IMR-90 (cell line): ENCODE measurements at regions of chr3 and their contacts with region 1.

Region 1: GRCh38 chr3:134427400-134428145 is 53.3 kb upstream of the AMOTL2 start:
- DNase-seq: peak; percentile 100
- ATAC-seq: peak; percentile 88
- H3K4me3 ChIP-seq: no peak overlapping the region
- H3K27ac ChIP-seq: peak overlapping the region; percentile 90
- H3K4me1 ChIP-seq: peaks cover 32% of the 10 kb centered on the region
- H3K27me3 ChIP-seq: no peaks in the 10 kb centered on the region
- CTCF ChIP-seq: peak; percentile 36
- POLR2A ChIP-seq: peak; percentile 86
- RAD21 ChIP-seq: peak; percentile 63

Region 2: DNA sequence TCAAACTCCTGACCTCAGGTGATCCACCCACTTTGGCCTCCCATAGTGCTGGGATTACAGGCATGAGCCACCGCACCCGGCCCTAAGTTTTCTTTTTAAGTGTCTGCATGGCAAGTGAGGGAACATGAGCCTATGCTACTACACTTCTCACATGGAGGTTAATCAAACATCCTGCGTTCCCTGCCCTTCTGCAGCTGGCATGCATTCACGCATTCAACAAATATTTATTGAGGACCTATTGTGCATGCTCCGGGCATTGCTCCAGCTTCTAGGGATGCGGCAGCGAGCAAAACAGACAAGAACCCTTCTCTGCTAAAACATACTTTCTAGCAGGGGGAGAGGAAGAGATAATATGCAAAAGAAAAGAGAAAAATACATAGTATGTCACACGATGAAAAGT is 1873.1 kb before region 1 on chr3:
- CTCF ChIA-PET with region 1: no interaction called
- POLR2A ChIA-PET with region 1: no interaction called
- dilution Hi-C with region 1: no loop called
- in situ Hi-C with region 1: no loop called
- intact Hi-C with region 1: no loop called
- DNase-seq: peak; percentile 51
- ATAC-seq: peak; percentile 60
- H3K4me3 ChIP-seq: no peak overlapping the region
- H3K27ac ChIP-seq: no peak overlapping the region
- H3K4me1 ChIP-seq: peaks cover 12% of the 10 kb centered on the region
- H3K27me3 ChIP-seq: no peaks in the 10 kb centered on the region
- CTCF ChIP-seq: no peak
- POLR2A ChIP-seq: no peak
- RAD21 ChIP-seq: no peak

Region 3: GRCh38 chr3:134381827-134382442 is 45.6 kb before region 1 on chr3:
- CTCF ChIA-PET with region 1: no interaction called
- POLR2A ChIA-PET with region 1: no interaction called
- dilution Hi-C with region 1: no loop called
- in situ Hi-C with region 1: loop called (anchors 5 kb)
- intact Hi-C with region 1: no loop called
- DNase-seq: no peak
- ATAC-seq: no peak
- H3K4me3 ChIP-seq: no peak overlapping the region
- H3K27ac ChIP-seq: no peak overlapping the region
- H3K4me1 ChIP-seq: no peaks in the 10 kb centered on the region
- H3K27me3 ChIP-seq: no peaks in the 10 kb centered on the region
- CTCF ChIP-seq: no peak
- POLR2A ChIP-seq: no peak
- RAD21 ChIP-seq: no peak

Region 4: DNA sequence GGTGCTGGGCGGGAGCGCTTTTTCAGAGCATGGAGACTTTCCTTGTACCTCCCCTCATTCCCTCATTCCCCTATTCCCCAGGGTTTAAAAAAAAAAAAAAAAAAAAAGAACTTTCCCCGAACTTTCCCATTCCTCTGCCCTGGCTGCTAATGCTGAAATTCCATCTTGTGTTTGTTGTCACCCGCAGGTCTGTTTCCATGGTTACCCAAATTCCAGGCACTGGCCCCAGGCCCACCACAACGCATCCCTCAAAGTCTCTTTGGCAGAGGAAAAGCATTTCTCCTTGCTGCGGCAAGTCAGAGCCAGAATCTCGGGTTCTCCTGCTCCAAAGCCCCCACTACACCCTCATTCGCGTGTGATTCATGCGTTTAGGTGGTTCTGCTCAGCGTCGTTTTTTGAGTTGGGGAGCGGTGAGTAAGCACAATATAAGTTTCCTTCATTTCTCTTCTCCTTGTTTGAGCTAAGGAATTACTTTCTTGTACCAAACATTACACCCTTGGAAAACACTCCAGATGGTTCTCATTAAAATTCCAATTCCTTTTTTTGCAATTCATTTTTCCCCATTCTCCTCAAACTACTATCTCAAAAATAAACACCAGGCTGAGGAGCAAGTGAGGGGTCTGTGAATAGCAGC is 36.6 kb after region 1 on chr3:
- CTCF ChIA-PET with region 1: interaction called, 6 read pairs
- POLR2A ChIA-PET with region 1: no interaction called
- dilution Hi-C with region 1: no loop called
- in situ Hi-C with region 1: loop called (anchors 5 kb)
- intact Hi-C with region 1: loop called (anchors 1 kb)
- DNase-seq: peak; percentile 99
- ATAC-seq: peak; percentile 70
- H3K4me3 ChIP-seq: no peak overlapping the region
- H3K27ac ChIP-seq: peak overlapping the region; percentile 92
- H3K4me1 ChIP-seq: peaks cover 38% of the 10 kb centered on the region
- H3K27me3 ChIP-seq: no peaks in the 10 kb centered on the region
- CTCF ChIP-seq: no peak
- POLR2A ChIP-seq: no peak
- RAD21 ChIP-seq: peak; percentile 34